Heart left ventricle (tissue), 16 donors: ENCODE measurements at regions of chr16 and their contacts with region 1.

Region 1: GRCh38 chr16:68704232-68704867 is 32.7 kb upstream of the CDH1 start:
- DNase-seq: peak; percentile 42 to 67 (median 46)
- ATAC-seq: peak; percentile 60 to 79 (median 78)
- H3K4me3 ChIP-seq: no peak overlapping the region
- H3K27ac ChIP-seq: no peak overlapping the region
- H3K4me1 ChIP-seq: no peaks in the 10 kb centered on the region
- H3K27me3 ChIP-seq: peaks cover 0 to 3% (median 0%) of the 10 kb centered on the region in 9 donors
- CTCF ChIP-seq: peak in 11 of 12 donors; percentile 29 to 62 (median 46)
- POLR2A ChIP-seq: no peak

Region 2: GRCh38 chr16:68800257-68800875 is 96.0 kb after region 1 on chr16:
- intact Hi-C with region 1: loop called in 3 of 10 experiments (anchors 5 to 10 kb)
- DNase-seq: peak in 3 of 5 donors; percentile 10 to 33 (median 23)
- ATAC-seq: peak in 3 of 4 donors; percentile 50 to 76 (median 70)
- H3K4me3 ChIP-seq: no peak overlapping the region
- H3K27ac ChIP-seq: no peak overlapping the region
- H3K4me1 ChIP-seq: no peaks in the 10 kb centered on the region
- H3K27me3 ChIP-seq: no peaks in the 10 kb centered on the region
- CTCF ChIP-seq: peak in 11 of 12 donors; percentile 28 to 73 (median 57)
- POLR2A ChIP-seq: no peak